A673 (cell line): ENCODE measurements at regions of chr3 and their contacts with region 1.

Region 1: DNA sequence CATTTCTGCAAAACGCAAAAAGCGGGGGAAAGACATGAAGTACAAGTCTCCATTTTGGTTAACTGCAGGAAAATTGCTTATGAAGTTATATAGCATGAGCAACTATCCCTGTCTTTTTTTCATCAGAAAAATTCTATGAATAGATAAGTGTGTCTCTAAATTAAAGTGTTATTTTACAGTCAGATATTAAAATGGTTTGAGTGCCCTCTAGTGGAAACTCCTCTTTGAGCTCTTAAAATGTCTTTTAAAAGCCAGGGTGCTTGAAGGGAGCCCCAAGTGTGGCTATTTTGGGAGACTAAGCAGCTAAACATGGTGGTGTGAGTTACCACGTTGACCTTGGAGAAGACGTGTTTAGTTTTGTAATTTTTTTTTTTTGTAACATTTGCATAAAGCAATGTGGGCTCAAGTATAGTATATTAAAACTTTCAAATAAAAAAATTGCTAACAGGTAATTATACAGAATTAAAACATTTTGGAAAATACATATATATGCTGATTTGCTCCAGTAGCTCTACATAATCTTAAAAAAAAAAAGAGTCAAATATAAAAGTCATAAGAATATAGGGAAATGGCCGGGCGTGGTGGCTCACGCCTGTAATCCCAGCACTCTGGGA is 77.2 kb downstream of the PPP2R3A start:
- DNase-seq: peak; percentile 68
- H3K4me3 ChIP-seq: no peak overlapping the region
- H3K27ac ChIP-seq: no peak overlapping the region
- H3K4me1 ChIP-seq: no peaks in the 10 kb centered on the region
- H3K27me3 ChIP-seq: no peaks in the 10 kb centered on the region
- CTCF ChIP-seq: peak; percentile 72

Region 2: DNA sequence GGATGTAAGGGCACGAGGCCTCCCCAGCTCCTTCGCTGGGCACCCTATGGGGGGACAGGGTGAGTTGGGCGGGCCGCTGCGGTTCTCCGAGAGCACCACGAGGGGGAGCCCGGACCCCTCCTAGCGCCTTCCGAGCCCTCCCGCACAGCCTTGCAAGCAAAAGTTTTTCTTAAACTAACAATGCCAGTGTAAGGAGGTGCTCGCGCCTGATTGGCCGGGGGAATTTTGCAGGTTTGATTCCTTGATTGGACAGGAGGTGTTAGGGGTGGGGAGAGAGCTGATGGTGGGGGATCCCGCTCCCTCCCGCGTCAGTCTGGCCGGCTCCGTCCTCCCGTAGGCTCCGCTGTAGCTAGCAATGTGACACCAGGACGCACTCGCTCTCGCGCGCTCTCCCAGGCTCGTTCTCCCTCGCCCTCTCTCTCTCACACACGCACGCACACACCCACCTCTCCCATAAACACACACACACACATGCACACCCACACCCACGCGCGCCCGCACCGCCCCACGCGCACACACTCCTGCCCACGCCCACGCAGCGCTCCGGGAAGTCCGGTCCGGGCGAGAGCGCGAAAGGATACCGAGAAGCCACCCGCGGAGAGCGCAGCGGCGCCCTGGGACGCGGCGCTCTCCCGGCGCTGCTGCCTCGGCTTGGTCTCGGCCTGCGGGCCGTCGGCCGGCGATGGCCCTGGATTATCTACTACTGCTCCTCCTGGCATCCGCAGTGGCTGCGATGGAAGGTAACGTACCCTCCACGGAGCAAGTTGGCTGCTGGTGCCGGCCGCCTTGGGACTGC is 1247.6 kb before region 1 on chr3 and contains the start of gene EPHB1:
- CTCF ChIA-PET with region 1: interaction called, 10 read pairs
- POLR2A ChIA-PET with region 1: no interaction called
- intact Hi-C with region 1: loop called (anchors 5 kb)
- DNase-seq: peak; percentile 95
- H3K4me3 ChIP-seq: peak within 1 kb of the TSS; percentile 46
- H3K27ac ChIP-seq: no peak within 1 kb of the TSS
- H3K4me1 ChIP-seq: peaks cover 9% of the 10 kb centered on the region
- H3K27me3 ChIP-seq: peaks cover 52% of the 10 kb centered on the region
- CTCF ChIP-seq: peak; percentile 93
- total RNA-seq, gene EPHB1: 0.11 and 0.61 TPM in 2 replicates

Region 3: DNA sequence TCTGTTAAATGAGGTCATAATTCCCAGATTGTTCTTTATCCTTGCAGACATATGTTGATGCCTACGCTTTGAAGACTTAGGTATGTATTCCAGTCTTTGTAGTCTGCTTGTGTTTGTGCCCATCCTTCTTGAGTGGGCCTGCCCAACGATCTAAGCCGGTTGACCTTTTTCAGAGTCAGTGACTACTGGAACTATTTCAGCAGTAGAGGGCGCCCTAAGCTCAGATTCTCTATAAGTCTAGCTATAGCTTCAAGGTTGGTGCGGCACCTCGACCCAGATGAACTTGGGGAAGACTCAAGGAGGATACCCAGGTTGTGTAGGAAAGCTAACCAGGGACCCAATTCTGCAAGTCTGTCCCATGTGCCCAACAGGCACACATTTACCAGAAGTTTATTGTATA is 306.0 kb before region 1 on chr3:
- CTCF ChIA-PET with region 1: no interaction called
- POLR2A ChIA-PET with region 1: no interaction called
- intact Hi-C with region 1: loop called (anchors 2 kb)
- DNase-seq: peak; percentile 56
- H3K4me3 ChIP-seq: no peak overlapping the region
- H3K27ac ChIP-seq: no peak overlapping the region
- H3K4me1 ChIP-seq: no peaks in the 10 kb centered on the region
- H3K27me3 ChIP-seq: peaks cover 4% of the 10 kb centered on the region
- CTCF ChIP-seq: peak; percentile 54

Region 4: GRCh38 chr3:135895106-135895733 is 147.5 kb before region 1 on chr3:
- CTCF ChIA-PET with region 1: no interaction called
- POLR2A ChIA-PET with region 1: no interaction called
- intact Hi-C with region 1: loop called (anchors 5 kb)
- DNase-seq: peak; percentile 78
- H3K4me3 ChIP-seq: no peak overlapping the region
- H3K27ac ChIP-seq: no peak overlapping the region
- H3K4me1 ChIP-seq: no peaks in the 10 kb centered on the region
- H3K27me3 ChIP-seq: peaks cover 23% of the 10 kb centered on the region
- CTCF ChIP-seq: peak; percentile 90

Region 5: DNA sequence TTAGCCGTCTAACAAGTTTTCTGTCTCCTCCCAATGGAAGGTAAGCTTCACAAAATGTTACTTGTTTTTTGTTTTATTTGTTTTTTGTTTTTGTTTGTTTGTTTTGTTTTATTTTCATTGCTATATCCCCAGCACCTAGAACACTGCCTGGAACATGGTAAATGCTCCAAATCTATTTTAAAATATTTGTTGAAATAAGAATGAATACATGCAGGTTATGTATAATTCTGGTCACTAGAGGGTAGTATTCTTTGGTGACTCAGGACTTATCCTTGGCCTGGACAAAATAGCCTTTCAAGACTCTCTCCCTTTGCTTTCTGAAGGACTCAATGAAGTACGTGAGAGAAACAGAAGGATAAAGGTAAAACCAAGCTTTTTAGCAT is 124.1 kb before region 1 on chr3:
- CTCF ChIA-PET with region 1: no interaction called
- POLR2A ChIA-PET with region 1: no interaction called
- intact Hi-C with region 1: loop called (anchors 5 kb)
- DNase-seq: no peak
- H3K4me3 ChIP-seq: no peak overlapping the region
- H3K27ac ChIP-seq: no peak overlapping the region
- H3K4me1 ChIP-seq: no peaks in the 10 kb centered on the region
- H3K27me3 ChIP-seq: peaks cover 6% of the 10 kb centered on the region
- CTCF ChIP-seq: peak; percentile 57

Region 6: GRCh38 chr3:137807998-137808397 is 1765.3 kb after region 1 on chr3:
- CTCF ChIA-PET with region 1: no interaction called
- POLR2A ChIA-PET with region 1: no interaction called
- intact Hi-C with region 1: no loop called
- DNase-seq: peak; percentile 4
- H3K4me3 ChIP-seq: no peak overlapping the region
- H3K27ac ChIP-seq: no peak overlapping the region
- H3K4me1 ChIP-seq: no peaks in the 10 kb centered on the region
- H3K27me3 ChIP-seq: peaks cover 15% of the 10 kb centered on the region
- CTCF ChIP-seq: no peak